ENCODE measurements at regions of chr2 and their contacts with region 1.

Region 1: DNA sequence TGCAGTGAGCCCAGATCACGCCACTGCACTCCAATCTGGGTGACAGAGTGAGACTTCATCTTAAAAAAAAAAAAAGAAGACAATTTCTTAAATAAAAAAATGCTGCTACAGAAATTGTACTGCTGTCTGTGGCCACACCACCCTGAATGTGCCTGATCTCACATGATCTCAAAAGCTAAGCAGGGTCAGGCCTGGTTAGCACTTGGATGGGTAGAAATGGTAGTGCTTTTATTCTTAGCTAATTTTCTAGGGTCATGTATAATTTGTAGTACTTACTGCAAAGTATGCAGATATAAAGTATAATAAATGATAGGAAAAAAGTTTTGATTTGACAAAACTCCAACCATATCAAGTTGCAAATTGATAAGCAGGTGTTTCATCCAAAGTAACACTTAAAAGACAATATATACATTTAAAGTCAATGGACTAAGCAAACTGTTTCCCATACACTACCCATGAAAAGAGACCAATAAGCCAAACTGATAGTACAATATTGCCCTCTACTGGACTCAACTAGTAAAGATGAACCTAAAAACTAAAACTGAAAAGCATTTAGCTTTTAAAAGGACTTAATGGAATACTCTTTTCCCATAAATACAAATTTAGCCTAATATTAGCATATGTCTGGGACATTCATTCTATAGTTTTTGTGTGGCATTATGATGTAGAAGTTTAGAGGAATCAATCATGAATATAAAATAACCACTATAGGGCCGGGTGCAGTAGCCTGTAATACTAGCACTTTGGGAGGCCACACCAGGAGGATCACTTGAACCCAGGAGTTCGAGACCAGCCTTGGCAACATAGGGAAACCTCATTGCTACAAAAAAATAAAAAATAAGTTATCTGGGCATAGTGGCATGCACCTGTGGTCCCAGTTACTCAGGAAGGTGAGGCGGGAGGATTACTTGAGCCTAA is 18.6 kb upstream of the PEX13 start:
- DNase-seq: peak; percentile 63
- H3K4me3 ChIP-seq: no peak overlapping the region
- H3K27ac ChIP-seq: no peak overlapping the region
- H3K4me1 ChIP-seq: no peaks in the 10 kb centered on the region
- H3K27me3 ChIP-seq: no peaks in the 10 kb centered on the region

Region 2: DNA sequence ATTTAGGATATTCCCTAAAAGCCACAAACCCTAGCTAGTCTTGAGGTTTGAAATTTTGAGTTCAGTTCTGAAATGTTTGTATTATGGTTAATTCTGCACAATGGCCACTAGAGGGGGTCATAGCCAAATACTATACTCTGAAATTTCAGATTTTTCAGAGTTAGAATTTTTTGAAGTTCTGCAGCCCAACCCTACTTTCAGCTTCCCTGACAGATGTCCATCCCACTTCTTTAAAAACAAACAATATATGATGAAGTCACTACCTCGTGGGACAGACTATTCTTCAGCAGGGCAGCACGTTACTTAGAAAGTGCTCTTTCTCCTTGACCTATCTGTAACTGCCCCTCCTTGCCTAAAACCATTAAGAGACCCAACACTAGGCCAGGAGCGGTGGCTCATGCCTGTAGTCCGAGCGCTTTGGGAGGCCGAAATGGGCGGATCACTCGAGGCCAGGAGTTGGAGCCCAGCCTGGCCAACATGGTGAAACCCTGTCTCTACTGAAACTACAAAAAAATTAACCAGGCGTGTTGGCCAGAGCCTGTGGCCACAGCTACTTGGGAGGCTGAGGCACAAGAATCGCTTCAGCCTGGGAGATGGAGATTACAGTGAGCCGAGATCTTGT is 291.0 kb before region 1 on chr2:
- in situ Hi-C with region 1: loop called (anchors 25 kb)
- DNase-seq: peak; percentile 70
- H3K4me3 ChIP-seq: no peak overlapping the region
- H3K27ac ChIP-seq: no peak overlapping the region
- H3K4me1 ChIP-seq: peaks cover 23% of the 10 kb centered on the region
- H3K27me3 ChIP-seq: no peaks in the 10 kb centered on the region

Region 3: DNA sequence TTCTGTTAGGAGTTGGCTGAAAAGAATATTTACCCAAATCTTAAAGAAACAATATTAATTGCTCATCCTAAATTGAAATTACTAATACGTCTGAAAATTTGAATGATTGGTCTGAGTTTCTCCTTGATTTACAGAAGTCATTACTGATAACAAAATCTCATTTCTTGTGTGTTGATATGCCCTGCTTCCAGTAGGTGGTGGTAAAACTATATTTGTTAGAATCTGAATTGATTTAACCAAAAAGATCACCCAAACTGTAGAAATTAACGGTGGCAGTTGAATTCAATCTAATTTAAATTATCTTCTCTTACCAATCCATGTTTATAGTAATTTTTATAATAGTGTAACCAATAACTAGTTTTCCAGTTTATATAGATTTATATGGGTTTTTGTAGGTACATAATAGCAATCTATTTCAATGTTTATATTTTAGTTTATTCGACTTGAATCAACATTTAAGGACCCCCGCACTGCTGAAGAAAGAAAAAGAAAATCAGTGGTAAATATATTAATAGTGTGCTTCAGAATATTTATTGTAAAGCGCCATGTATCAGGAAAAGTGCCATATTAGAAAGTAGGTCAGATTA is 204.5 kb before region 1 on chr2:
- in situ Hi-C with region 1: loop called (anchors 10 kb)
- DNase-seq: peak; percentile 43
- H3K4me3 ChIP-seq: no peak overlapping the region
- H3K27ac ChIP-seq: no peak overlapping the region
- H3K4me1 ChIP-seq: 0 out of 2 replicates have a peak, but pooled peaks cover 5% of the 10 kb centered on the region
- H3K27me3 ChIP-seq: no peaks in the 10 kb centered on the region

Measured in GM23248 (cell line).